H1 (cell line): ENCODE measurements at regions of chr6 and their contacts with region 1.

Region 1: DNA sequence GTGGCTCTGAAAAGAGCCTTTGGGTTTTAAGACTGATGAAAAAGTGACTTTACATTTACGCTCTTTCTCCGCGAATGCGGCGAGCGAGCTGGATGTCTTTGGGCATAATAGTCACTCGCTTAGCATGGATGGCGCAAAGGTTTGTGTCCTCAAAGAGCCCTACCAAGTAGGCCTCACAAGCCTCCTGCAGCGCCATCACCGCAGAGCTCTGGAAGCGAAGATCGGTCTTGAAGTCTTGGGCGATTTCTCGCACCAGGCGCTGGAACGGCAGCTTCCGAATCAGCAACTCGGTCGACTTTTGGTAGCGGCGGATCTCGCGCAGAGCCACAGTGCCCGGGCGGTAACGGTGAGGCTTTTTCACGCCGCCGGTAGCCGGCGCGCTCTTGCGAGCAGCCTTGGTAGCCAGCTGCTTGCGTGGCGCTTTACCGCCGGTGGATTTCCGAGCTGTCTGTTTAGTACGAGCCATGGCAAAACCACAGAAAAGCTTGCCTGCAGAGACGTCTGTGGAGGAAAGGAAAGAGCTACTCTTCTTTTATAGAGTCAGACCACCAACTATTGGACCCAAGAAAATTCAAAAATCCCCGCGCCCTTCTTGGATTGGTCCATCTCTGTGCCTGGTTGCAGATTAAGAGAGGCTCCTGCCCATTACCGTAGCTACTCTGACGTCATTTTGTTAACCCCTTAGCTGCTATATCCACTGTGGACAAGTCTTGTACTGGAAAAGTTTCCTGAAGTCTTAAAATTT is 55.5 kb upstream of the HFE start:
- DNase-seq: peak; percentile 82 to 88
- H3K4me3 ChIP-seq: peak overlapping the region; percentile 81 to 95 (median 92)
- H3K27ac ChIP-seq: peak overlapping the region; percentile 96
- H3K4me1 ChIP-seq: peaks cover 2 to 18% (median 13%) of the 10 kb centered on the region in 4 experiments; a peak in 5 of 7 replicates
- H3K27me3 ChIP-seq: no peaks in the 10 kb centered on the region
- CTCF ChIP-seq: no peak
- EP300 ChIP-seq: peak in 1 of 2 experiments; percentile 2; a peak in 1 of 3 replicates
- POLR2A ChIP-seq: peak; percentile 99 to 100
- RAD21 ChIP-seq: no peak

Region 2: GRCh38 chr6:26103770-26104456 is 72.1 kb after region 1 on chr6:
- CTCF ChIA-PET with region 1: interaction called, 9 read pairs
- POLR2A ChIA-PET with region 1: interaction called, 336 read pairs
- DNase-seq: peak; percentile 80 to 83
- H3K4me3 ChIP-seq: peak overlapping the region; percentile 41 to 63 (median 52)
- H3K27ac ChIP-seq: peak overlapping the region; percentile 92
- H3K4me1 ChIP-seq: peaks cover 0 to 3% (median 0%) of the 10 kb centered on the region in 4 experiments; a peak in 2 of 7 replicates
- H3K27me3 ChIP-seq: no peaks in the 10 kb centered on the region
- CTCF ChIP-seq: peak in 2 of 3 experiments; percentile 26 to 37; a peak in 3 of 4 replicates
- EP300 ChIP-seq: peak in 1 of 2 experiments; percentile 96; a peak in 1 of 3 replicates
- POLR2A ChIP-seq: peak; percentile 98 to 99
- RAD21 ChIP-seq: no peak; a peak in 1 of 4 replicates

Region 3: GRCh38 chr6:26196846-26197648 is 165.3 kb after region 1 on chr6:
- CTCF ChIA-PET with region 1: interaction called, 3 read pairs
- POLR2A ChIA-PET with region 1: interaction called, 352 read pairs
- DNase-seq: peak in 1 of 2 experiments; percentile 76
- H3K4me3 ChIP-seq: peak overlapping the region; percentile 85 to 98 (median 89)
- H3K27ac ChIP-seq: peak overlapping the region; percentile 82
- H3K4me1 ChIP-seq: peaks cover 0 to 1% (median 0%) of the 10 kb centered on the region in 4 experiments; a peak in 1 of 7 replicates
- H3K27me3 ChIP-seq: no peaks in the 10 kb centered on the region
- CTCF ChIP-seq: no peak
- EP300 ChIP-seq: no peak
- POLR2A ChIP-seq: peak; percentile 99
- RAD21 ChIP-seq: no peak

Region 4: GRCh38 chr6:26223650-26224546 is 192.1 kb after region 1 on chr6:
- CTCF ChIA-PET with region 1: interaction called, 3 read pairs
- POLR2A ChIA-PET with region 1: interaction called, 113 read pairs
- DNase-seq: no peak
- H3K4me3 ChIP-seq: peak overlapping the region; percentile 61 to 94 (median 76)
- H3K27ac ChIP-seq: peak overlapping the region; percentile 91
- H3K4me1 ChIP-seq: peaks cover 0 to 7% (median 3%) of the 10 kb centered on the region in 4 experiments; a peak in 5 of 7 replicates
- H3K27me3 ChIP-seq: no peaks in the 10 kb centered on the region
- CTCF ChIP-seq: no peak
- EP300 ChIP-seq: no peak
- POLR2A ChIP-seq: peak; percentile 48 to 76; a peak in 2 of 3 replicates
- RAD21 ChIP-seq: no peak

Region 5: DNA sequence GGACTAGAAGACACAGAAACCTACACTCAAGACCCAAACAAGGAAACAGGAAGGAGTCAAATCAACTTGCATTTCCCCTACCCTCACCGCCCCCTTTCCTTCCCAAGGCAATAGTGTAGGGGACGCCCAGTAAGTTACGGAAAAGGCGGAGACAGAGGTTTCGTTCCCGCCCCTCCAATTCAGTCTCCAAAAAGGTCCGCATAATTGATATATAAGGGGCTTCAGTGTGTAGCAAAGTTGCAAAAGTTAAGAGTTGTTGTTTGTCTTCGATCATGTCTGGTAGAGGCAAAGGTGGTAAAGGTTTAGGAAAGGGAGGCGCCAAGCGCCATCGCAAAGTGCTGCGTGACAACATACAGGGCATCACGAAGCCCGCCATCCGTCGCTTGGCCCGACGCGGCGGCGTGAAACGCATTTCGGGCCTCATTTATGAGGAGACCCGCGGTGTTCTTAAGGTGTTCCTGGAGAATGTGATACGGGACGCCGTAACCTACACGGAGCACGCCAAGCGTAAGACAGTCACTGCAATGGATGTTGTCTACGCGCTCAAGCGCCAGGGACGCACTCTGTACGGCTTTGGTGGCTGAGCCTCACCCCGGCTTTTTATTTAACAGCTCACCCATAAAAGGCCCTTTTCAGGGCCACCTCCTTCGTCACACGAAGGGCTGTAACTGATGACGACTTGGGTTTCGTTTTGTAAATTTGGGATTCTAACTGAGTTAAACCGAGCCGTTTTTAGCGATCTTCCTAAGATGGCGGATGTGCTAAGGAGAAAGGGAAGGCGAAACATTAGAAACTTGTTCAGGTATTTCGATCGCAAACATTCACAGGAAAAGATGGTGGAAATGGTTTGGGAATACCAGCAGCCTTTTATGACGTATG is 208.6 kb after region 1 on chr6:
- CTCF ChIA-PET with region 1: no interaction called
- POLR2A ChIA-PET with region 1: interaction called, 119 read pairs
- DNase-seq: peak in 1 of 2 experiments; percentile 78
- H3K4me3 ChIP-seq: peak overlapping the region; percentile 64 to 96 (median 87)
- H3K27ac ChIP-seq: peak overlapping the region; percentile 96
- H3K4me1 ChIP-seq: peaks cover 1 to 8% (median 4%) of the 10 kb centered on the region in 4 experiments; a peak in 6 of 7 replicates
- H3K27me3 ChIP-seq: no peaks in the 10 kb centered on the region
- CTCF ChIP-seq: no peak
- EP300 ChIP-seq: peak in 1 of 2 experiments; percentile 87; a peak in 1 of 3 replicates
- POLR2A ChIP-seq: peak; percentile 100
- RAD21 ChIP-seq: no peak

Region 6: DNA sequence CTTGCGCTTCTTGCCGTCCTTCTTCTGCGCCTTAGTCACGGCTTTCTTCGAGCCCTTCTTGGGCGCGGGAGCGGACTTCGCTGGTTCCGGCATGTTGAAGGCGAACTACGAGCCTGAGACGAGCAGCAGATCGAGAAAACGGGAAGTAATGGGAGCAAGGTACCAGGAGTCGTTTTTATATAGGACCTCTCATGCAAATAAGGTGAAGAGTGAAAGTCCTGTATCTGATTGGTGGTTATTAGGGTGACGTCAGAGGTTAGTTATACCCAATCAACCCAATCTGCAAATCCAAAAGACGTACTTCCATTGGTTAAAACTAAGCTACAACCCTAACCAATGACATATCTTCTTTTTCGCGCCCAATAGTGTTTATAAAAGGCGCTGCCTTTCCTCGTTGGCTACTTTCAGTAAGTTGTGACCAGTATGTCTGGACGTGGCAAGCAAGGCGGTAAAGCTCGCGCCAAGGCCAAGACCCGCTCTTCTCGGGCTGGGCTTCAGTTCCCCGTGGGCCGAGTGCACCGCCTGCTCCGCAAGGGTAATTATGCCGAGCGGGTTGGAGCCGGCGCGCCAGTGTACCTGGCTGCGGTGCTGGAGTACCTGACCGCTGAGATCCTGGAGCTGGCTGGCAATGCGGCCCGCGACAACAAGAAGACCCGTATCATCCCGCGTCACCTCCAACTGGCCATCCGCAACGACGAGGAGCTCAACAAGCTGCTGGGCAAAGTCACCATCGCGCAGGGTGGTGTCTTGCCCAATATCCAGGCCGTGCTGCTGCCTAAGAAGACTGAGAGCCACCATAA is 1115.1 kb after region 1 on chr6:
- CTCF ChIA-PET with region 1: no interaction called
- POLR2A ChIA-PET with region 1: interaction called, 39 read pairs
- DNase-seq: peak; percentile 89 to 93
- H3K4me3 ChIP-seq: peak overlapping the region; percentile 60 to 86 (median 76)
- H3K27ac ChIP-seq: peak overlapping the region; percentile 98
- H3K4me1 ChIP-seq: peaks cover 0 to 11% (median 1%) of the 10 kb centered on the region in 4 experiments; a peak in 4 of 7 replicates
- H3K27me3 ChIP-seq: no peaks in the 10 kb centered on the region
- CTCF ChIP-seq: no peak
- EP300 ChIP-seq: 0 out of 3 replicates have a peak, but pooled peaks of 1 of the 2 experiments have one; percentile 16
- POLR2A ChIP-seq: peak; percentile 98 to 99
- RAD21 ChIP-seq: no peak

Region 7: GRCh38 chr6:27871924-27872638 is 1840.3 kb after region 1 on chr6:
- CTCF ChIA-PET with region 1: no interaction called
- POLR2A ChIA-PET with region 1: interaction called, 57 read pairs
- DNase-seq: peak in 1 of 2 experiments; percentile 89
- H3K4me3 ChIP-seq: peak overlapping the region; percentile 61 to 73 (median 67)
- H3K27ac ChIP-seq: peak overlapping the region; percentile 96
- H3K4me1 ChIP-seq: peaks cover 0 to 16% (median 9%) of the 10 kb centered on the region in 4 experiments; a peak in 5 of 7 replicates
- H3K27me3 ChIP-seq: no peaks in the 10 kb centered on the region
- CTCF ChIP-seq: peak in 2 of 3 experiments; percentile 22 to 26; a peak in 3 of 4 replicates
- EP300 ChIP-seq: no peak; a peak in 1 of 3 replicates
- POLR2A ChIP-seq: peak; percentile 97 to 98
- RAD21 ChIP-seq: no peak